CD4-positive, alpha-beta memory T cell (primary cell): ENCODE measurements at regions of chr7 and their contacts with region 1.

Region 1: DNA sequence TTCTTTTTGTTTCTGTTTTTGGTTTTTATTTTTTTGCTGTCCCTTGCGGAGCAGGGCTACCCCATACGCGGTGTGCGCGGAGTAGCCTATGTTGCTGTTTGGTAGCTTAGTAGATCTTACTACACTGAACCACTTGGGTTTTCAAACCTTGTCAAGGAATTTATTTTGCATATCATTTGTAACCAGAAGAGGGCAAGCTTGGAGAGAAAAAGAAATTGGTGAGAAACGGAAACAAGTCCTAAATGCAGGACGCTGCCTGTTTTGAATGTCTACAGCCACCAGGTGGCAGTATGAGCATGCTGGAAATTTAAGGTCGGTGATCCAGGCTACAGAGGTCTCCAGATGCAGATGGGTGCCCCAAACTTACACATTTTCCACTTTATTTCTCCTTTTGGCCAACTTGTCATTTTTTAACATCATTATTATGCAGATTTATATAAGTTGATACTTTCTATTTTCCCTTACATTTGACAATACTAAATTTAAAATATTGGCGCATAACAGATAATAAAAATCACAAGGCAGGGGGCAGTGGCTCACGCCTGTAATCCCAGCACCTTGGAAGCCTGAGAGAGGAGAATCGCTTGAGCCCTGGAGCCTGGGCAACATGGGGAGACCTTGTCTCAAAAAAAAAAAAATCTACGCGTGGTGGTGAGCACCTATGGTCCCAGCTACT is 15.3 kb upstream of the TRA2A start:
- DNase-seq: peak; percentile 78 to 85 (median 84)
- H3K4me3 ChIP-seq: no peak overlapping the region
- H3K4me3 Mint-ChIP-seq: peak overlapping the region in 1 of 8 donors; percentile 39
- H3K27ac ChIP-seq: no peak overlapping the region
- H3K27ac Mint-ChIP-seq: peak overlapping the region in 5 of 7 donors; percentile 0 to 68 (median 51)
- H3K4me1 ChIP-seq: no peaks in the 10 kb centered on the region
- H3K4me1 Mint-ChIP-seq: peaks cover 5 to 7% (median 6%) of the 10 kb centered on the region in 4 donors
- H3K27me3 ChIP-seq: no peaks in the 10 kb centered on the region
- H3K27me3 Mint-ChIP-seq: no peaks in the 10 kb centered on the region

Region 2: DNA sequence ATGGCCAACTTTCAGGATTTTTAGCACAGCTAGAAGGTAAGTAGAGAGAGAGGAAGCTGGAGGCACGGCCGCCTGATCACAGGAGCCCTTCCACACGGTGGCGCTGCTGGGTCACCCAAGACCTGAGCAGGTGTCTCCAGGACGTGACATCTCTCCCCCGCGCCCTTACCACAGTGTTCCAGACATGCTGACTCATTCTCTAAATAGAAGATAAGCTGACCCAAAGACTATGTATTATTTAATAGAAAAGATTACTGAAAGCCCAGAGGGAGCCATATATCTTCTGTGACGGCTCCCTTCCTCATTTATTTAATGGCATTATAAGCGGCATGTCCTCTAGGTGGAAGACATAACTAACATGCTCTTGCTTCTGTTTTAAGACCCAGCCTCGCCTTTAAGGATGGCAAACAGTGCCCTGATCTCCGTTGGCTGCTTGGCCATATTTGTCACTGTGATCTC is 273.9 kb before region 1 on chr7:
- CTCF ChIA-PET with region 1: interaction called, 25 read pairs
- POLR2A ChIA-PET with region 1: no interaction called
- intact Hi-C with region 1: loop called (anchors 2 kb)
- DNase-seq: peak; percentile 77 to 90 (median 80)
- H3K4me3 ChIP-seq: no peak overlapping the region
- H3K4me3 Mint-ChIP-seq: peak overlapping the region in 7 of 8 donors; percentile 24 to 69 (median 65)
- H3K27ac ChIP-seq: no peak overlapping the region
- H3K27ac Mint-ChIP-seq: peak overlapping the region in 3 of 7 donors; percentile 4 to 18 (median 12)
- H3K4me1 ChIP-seq: peaks cover 4% of the 10 kb centered on the region
- H3K4me1 Mint-ChIP-seq: peaks cover 0 to 15% (median 7%) of the 10 kb centered on the region in 4 donors
- H3K27me3 ChIP-seq: no peaks in the 10 kb centered on the region
- H3K27me3 Mint-ChIP-seq: peaks cover 0 to 6% of the 10 kb centered on the region in 2 donors

Region 3: GRCh38 chr7:23357190-23358093 is 189.6 kb before region 1 on chr7:
- CTCF ChIA-PET with region 1: interaction called, 6 read pairs
- POLR2A ChIA-PET with region 1: no interaction called
- intact Hi-C with region 1: loop called (anchors 2 kb)
- DNase-seq: peak in 3 of 5 donors; percentile 4 to 12 (median 8)
- H3K4me3 ChIP-seq: no peak overlapping the region
- H3K4me3 Mint-ChIP-seq: peak overlapping the region in 2 of 8 donors; percentile 28 to 43
- H3K27ac ChIP-seq: no peak overlapping the region
- H3K27ac Mint-ChIP-seq: peak overlapping the region in 1 of 7 donors; percentile 22
- H3K4me1 ChIP-seq: peaks cover 25% of the 10 kb centered on the region
- H3K4me1 Mint-ChIP-seq: peaks cover 8 to 18% (median 9%) of the 10 kb centered on the region in 4 donors
- H3K27me3 ChIP-seq: no peaks in the 10 kb centered on the region
- H3K27me3 Mint-ChIP-seq: peaks cover 7 to 8% of the 10 kb centered on the region in 2 donors

Region 4: DNA sequence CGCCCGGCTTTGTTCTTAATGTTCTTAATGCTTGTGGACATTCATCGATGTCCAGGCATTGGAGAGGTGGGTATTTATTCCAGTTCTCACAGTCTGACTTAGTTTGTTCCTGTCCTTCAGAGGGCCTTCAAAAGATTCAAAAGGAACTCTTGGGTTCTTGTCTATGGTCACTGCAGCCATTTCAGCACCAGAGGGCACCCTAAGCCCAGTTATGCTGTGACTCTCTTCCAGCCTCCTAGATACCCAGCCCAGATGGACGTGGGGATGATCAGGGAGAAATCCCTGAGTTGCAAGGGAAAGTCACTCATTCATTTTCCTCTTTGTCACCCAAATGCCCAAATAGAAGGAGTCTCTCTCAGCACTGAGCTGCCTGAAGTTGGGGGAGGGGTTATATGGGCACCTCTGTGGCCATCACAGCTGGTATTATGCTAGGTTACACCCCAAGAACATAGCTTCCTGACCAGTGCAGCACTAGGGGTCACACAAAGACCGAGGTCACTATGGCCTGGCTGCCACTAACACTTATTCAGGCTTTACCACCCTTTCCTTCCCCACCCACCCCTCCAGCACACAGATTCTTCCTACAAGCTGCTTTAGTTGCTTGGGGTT is 23.7 kb after region 1 on chr7:
- CTCF ChIA-PET with region 1: interaction called, 10 read pairs
- POLR2A ChIA-PET with region 1: no interaction called
- intact Hi-C with region 1: no loop called
- DNase-seq: peak; percentile 44 to 65 (median 57)
- H3K4me3 ChIP-seq: no peak overlapping the region
- H3K4me3 Mint-ChIP-seq: peak overlapping the region in 2 of 8 donors; percentile 3 to 25
- H3K27ac ChIP-seq: no peak overlapping the region
- H3K27ac Mint-ChIP-seq: peak overlapping the region in 1 of 7 donors; percentile 5
- H3K4me1 ChIP-seq: no peaks in the 10 kb centered on the region
- H3K4me1 Mint-ChIP-seq: peaks cover 0 to 3% (median under 1%) of the 10 kb centered on the region in 4 donors
- H3K27me3 ChIP-seq: no peaks in the 10 kb centered on the region
- H3K27me3 Mint-ChIP-seq: peaks cover 10 to 14% of the 10 kb centered on the region in 2 donors

Region 5: DNA sequence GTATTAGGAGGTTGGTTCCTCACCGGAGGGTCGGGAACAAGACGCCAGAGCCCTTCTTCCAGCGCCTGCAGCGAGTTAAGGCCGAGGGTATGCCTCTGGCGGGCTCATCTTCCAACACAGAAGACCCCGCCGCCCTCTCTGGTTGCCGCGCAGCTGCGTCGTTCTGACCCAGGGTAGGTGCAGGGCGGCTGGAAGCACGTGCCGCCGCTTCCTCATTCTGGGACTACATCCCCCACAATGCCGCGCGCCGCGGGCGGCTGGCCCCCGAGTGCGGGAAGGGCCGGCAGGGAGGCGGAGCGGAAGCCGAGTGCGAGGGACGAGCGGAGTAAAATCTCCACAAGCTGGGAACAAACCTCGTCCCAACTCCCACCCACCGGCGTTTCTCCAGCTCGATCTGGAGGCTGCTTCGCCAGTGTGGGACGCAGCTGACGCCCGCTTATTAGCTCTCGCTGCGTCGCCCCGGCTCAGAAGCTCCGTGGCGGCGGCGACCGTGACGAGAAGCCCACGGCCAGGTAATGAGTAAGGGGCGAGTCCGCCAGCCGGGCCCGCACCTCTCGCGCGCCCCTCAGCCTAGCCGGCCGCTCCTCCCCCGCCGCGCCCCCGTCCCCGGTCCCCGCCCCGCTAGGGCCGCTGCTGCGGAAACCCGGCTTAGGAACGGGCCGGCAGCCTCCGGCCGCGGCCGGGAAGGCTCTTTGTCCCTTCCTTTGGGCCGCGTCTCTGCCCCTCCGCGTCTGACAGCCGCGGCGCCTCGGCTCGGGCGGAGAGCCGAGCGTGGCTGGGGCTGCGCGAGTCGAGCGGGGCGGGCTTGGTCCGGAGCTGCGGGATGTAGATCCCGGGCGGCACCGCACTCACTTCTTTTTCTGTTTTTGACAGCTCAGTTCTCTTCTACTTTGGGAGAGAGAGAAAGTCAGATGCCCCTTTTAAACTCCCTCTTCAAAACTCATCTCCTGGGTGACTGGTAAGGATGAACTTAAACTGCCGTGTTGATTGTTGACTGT is 50.4 kb after region 1 on chr7 and contains the start of gene CCDC126:
- CTCF ChIA-PET with region 1: interaction called, 17 read pairs
- POLR2A ChIA-PET with region 1: interaction called, 7 read pairs
- intact Hi-C with region 1: loop called (anchors 1 kb)
- DNase-seq: peak; percentile 73 to 80 (median 74)
- H3K4me3 ChIP-seq: peak within 1 kb of the TSS; percentile 61 to 67
- H3K4me3 Mint-ChIP-seq: peak within 1 kb of the TSS; percentile 86 to 96 (median 92)
- H3K27ac ChIP-seq: peak within 1 kb of the TSS; percentile 79
- H3K27ac Mint-ChIP-seq: peak within 1 kb of the TSS; percentile 47 to 91 (median 88)
- H3K4me1 ChIP-seq: peaks cover 19% of the 10 kb centered on the region
- H3K4me1 Mint-ChIP-seq: peaks cover 21 to 40% (median 35%) of the 10 kb centered on the region in 4 donors
- H3K27me3 ChIP-seq: no peaks in the 10 kb centered on the region
- H3K27me3 Mint-ChIP-seq: no peaks in the 10 kb centered on the region
- total RNA-seq, gene CCDC126: 15.5 to 17.7 TPM

Region 6: GRCh38 chr7:24587848-24588247 is 1040.8 kb after region 1 on chr7:
- CTCF ChIA-PET with region 1: interaction called, 3 read pairs
- POLR2A ChIA-PET with region 1: no interaction called
- intact Hi-C with region 1: loop called (anchors 5 kb)
- DNase-seq: peak; percentile 32 to 59 (median 49)
- H3K4me3 ChIP-seq: no peak overlapping the region
- H3K4me3 Mint-ChIP-seq: no peak overlapping the region
- H3K27ac ChIP-seq: no peak overlapping the region
- H3K27ac Mint-ChIP-seq: no peak overlapping the region
- H3K4me1 ChIP-seq: no peaks in the 10 kb centered on the region
- H3K4me1 Mint-ChIP-seq: peaks cover 5 to 12% (median 9%) of the 10 kb centered on the region in 4 donors
- H3K27me3 ChIP-seq: no peaks in the 10 kb centered on the region
- H3K27me3 Mint-ChIP-seq: peaks cover 0 to 3% of the 10 kb centered on the region in 2 donors

Region 7: DNA sequence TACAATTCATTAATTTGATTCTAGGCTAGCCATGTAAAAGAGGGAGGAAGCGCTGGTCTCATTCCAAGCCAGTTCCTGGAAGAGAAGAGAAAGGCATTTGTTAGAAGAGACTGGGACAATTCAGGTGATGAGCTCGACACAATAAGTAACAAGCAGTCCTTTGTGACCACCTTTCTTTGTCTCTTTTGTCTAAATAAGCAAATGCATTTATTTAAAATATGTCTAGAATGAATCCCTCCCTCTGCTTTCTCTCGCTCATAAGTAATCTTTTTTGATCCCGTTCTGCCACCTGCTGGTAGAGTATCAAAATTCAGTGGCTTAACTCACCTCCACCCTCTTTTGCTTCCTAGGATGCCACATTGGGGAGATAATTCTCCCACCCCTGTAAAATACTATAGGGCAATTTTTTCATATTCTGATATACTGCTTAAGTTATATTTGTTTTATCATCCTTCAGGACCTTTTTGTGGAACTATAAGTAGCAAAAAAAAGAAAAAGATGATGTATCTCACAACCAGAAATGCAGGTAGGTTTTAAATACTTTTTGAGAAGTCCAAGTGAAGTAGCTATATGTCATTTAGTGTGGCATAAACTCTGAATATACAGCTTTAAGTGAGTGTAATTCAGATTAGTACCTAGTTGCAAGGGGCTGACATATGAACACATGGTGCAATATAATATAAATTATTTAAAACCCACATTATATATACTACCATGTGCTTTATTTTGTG is 1118.7 kb after region 1 on chr7:
- CTCF ChIA-PET with region 1: no interaction called
- POLR2A ChIA-PET with region 1: no interaction called
- intact Hi-C with region 1: loop called (anchors 1 kb)
- DNase-seq: peak; percentile 31 to 47 (median 42)
- H3K4me3 ChIP-seq: no peak overlapping the region
- H3K4me3 Mint-ChIP-seq: no peak overlapping the region
- H3K27ac ChIP-seq: no peak overlapping the region
- H3K27ac Mint-ChIP-seq: no peak overlapping the region
- H3K4me1 ChIP-seq: no peaks in the 10 kb centered on the region
- H3K4me1 Mint-ChIP-seq: no peaks in the 10 kb centered on the region
- H3K27me3 ChIP-seq: no peaks in the 10 kb centered on the region
- H3K27me3 Mint-ChIP-seq: no peaks in the 10 kb centered on the region